OCI-LY7 (cell line): ENCODE measurements at regions of chr17 and their contacts with region 1.

Region 1: GRCh38 chr17:82674656-82675475 is 23.6 kb downstream of the RAB40B start:
- DNase-seq: peak; percentile 26
- H3K4me3 ChIP-seq: no peak overlapping the region
- H3K27ac ChIP-seq: no peak overlapping the region
- H3K4me1 ChIP-seq: peaks cover 50% of the 10 kb centered on the region
- CTCF ChIP-seq: no peak

Region 2: GRCh38 chr17:82518826-82519810 is 155.7 kb before region 1 on chr17 and contains the start of gene FOXK2:
- CTCF ChIA-PET with region 1: no interaction called
- POLR2A ChIA-PET with region 1: no interaction called
- intact Hi-C with region 1: no loop called
- DNase-seq: peak; percentile 99
- H3K4me3 ChIP-seq: peak within 1 kb of the TSS; percentile 84
- H3K27ac ChIP-seq: peak within 1 kb of the TSS; percentile 67
- H3K4me1 ChIP-seq: peaks cover 39% of the 10 kb centered on the region
- CTCF ChIP-seq: no peak
- total RNA-seq, gene FOXK2: 62.4 and 76.2 TPM in 2 replicates

Region 3: GRCh38 chr17:82710499-82711232 is 35.8 kb after region 1 on chr17:
- CTCF ChIA-PET with region 1: interaction called, 5 read pairs
- POLR2A ChIA-PET with region 1: interaction called, 9 read pairs
- intact Hi-C with region 1: loop called (anchors 1 kb)
- DNase-seq: peak; percentile 38
- H3K4me3 ChIP-seq: no peak overlapping the region
- H3K27ac ChIP-seq: no peak overlapping the region
- H3K4me1 ChIP-seq: peaks cover 34% of the 10 kb centered on the region
- CTCF ChIP-seq: peak; percentile 68

Region 4: DNA sequence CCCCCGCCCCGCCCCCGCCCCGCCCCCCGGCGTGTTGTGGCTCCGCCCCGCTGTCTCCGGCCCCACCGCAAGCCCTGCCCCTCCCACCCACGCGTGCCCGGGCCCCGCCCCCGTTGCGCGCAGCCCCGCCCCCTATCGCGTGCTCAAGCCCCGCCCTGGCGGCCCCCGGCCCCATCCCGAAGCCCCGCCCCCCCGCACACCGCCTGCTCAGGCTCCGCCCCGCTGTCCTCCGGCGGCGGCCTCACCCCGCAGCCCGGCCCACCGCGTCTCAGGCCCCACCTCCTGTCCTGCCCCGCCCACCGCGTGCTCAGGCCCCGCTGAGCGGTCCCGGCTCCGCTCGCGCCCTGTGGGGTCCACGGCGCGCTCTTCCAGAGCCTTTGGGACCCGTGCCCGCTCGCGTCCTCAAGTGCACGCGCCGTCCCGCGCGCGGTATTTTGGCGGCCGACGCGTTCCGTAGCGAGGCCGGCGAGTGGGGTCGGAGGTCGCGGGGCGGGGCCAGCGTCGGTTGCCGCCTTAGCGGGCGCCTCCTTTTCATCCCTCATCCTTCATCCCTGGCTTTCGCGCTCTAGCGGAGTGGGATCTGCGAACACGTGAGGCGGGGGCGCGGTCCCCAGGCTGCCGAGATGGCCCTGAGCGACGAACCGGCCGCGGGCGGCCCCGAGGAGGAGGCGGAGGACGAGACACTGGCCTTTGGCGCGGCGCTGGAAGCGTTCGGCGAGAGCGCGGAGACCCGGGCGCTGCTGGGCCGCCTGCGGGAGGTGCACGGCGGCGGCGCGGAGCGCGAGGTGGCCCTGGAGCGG is 76.9 kb after region 1 on chr17 and contains the start of gene TBCD:
- CTCF ChIA-PET with region 1: no interaction called
- POLR2A ChIA-PET with region 1: interaction called, 5 read pairs
- intact Hi-C with region 1: loop called (anchors 5 kb)
- DNase-seq: peak; percentile 93
- H3K4me3 ChIP-seq: peak within 1 kb of the TSS; percentile 84
- H3K27ac ChIP-seq: peak within 1 kb of the TSS; percentile 64
- H3K4me1 ChIP-seq: peaks cover 31% of the 10 kb centered on the region
- CTCF ChIP-seq: no peak
- total RNA-seq, gene TBCD: 57.0 and 87.8 TPM in 2 replicates

Region 5: DNA sequence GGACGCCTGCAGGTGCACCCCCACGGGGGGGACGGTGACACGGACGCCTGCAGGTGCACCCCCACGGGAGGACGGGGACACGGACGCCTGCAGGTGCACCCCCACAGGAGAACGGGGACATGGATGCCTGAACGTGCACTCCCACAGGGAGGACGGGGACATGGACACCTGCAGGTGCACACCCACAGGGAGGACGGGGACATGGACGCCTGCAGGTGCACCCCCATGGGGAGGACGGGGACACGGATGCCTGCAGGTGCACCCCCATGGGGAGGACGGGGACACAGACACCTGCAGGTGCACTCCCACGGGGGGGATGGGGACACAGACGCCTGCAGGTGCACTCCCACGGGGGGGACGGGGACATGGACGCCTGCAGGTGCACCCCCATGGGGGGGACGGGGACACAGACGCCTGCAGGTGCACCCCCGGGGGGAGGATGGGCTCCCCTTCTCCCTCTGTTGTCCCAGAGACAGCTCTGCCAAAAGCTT is 290.0 kb after region 1 on chr17:
- CTCF ChIA-PET with region 1: no interaction called
- POLR2A ChIA-PET with region 1: no interaction called
- intact Hi-C with region 1: loop called (anchors 5 kb)
- DNase-seq: peak; percentile 52
- H3K4me3 ChIP-seq: no peak overlapping the region
- H3K27ac ChIP-seq: peak overlapping the region; percentile 32
- H3K4me1 ChIP-seq: peaks cover 68% of the 10 kb centered on the region
- CTCF ChIP-seq: no peak

Region 6: DNA sequence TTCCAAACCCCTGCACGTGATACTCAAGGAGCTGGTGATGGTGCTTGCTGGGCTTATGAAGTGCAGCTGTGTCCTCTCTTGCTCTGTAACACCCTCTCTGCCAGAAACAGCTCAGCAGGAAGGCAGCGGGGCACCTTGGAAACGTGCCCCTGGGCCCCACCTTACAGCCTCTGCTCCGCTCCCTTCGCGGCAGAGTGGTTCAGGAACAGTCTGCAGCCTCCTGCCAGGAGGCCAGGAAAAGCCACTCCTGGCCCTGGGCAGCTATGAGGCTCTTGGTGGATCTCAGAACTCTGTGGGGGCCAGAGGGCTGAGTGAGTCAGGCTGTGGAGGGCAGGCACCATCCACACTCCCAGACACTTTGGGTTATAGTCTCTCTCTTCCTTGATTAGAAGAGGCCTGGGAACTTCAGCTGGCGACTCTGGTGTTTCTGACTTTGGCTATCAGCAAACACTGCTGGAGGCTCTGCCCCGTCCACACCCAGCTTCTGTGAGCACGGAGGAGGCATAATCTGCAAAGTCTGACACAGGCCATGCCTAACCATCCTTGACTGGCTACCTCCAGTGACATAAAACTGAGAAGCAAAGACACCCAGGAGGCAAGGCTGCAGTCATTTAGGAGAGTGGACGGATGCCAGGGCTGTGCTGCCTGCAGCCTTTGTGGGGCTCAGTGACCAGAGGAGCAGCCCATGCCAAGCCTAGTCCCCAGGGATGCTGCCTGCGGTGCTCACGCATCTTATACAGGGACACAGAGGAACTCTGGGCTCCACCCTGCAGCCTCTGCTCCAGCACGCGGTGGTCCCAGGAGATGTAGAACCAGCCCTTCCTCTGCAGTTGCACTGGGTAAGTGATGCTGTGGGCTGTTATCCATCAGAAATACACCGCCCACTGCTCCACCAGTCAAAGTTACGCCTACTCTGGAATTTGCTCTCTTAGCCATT is 469.8 kb after region 1 on chr17:
- CTCF ChIA-PET with region 1: no interaction called
- POLR2A ChIA-PET with region 1: no interaction called
- intact Hi-C with region 1: no loop called
- DNase-seq: no peak
- H3K4me3 ChIP-seq: no peak overlapping the region
- H3K27ac ChIP-seq: no peak overlapping the region
- H3K4me1 ChIP-seq: no peaks in the 10 kb centered on the region
- CTCF ChIP-seq: no peak